ENCODE measurements at regions of chr11 and their contacts with region 1.

Region 1: DNA sequence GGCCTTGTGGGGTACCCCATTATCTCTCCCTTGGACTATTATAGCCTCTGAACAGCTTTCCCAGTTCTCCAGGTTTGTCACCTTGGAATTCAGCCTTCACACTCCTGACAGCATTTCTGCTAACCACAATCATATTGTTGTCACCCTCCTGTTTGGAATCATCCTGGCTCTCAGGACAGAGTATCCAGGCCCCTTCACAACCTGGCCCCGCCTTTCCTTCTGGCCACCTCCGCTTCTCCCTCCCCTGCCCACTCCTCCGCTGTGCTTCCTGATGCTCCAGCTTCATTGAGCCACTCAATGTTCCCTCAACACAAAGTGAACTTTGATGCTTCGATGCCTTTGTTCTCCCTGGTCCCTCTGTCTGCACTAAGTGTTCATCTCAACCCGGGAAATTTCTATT is 3.1 kb downstream of the GPR83 start:
- DNase-seq: no peak
- ATAC-seq: no peak
- H3K4me3 ChIP-seq: no peak overlapping the region
- H3K27ac ChIP-seq: no peak overlapping the region
- H3K4me1 ChIP-seq: no peaks in the 10 kb centered on the region
- H3K27me3 ChIP-seq: no peaks in the 10 kb centered on the region

Region 2: DNA sequence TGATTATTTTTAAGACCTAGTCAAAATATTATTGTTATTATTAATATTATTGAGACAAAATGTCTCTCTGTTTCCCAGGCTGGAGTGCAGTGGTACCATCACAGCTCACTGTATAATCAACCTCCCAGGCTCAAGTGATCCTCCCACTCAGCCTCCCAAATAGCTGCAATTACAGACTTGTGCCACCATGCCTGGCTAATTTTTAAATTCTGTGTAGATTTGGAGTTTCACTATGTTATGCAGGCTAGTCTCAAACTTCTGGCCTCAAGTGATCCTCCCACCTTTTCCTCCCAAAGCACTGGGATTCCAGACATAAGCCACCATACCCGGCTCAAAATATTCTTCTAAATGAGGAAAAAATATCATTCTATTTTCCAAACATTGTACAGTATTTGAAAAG is 1237.3 kb before region 1 on chr11:
- intact Hi-C with region 1: loop called in 1 of 2 experiments (anchors 5 kb)
- DNase-seq: no peak
- ATAC-seq: no peak
- H3K4me3 ChIP-seq: no peak overlapping the region
- H3K27ac ChIP-seq: no peak overlapping the region
- H3K4me1 ChIP-seq: no peaks in the 10 kb centered on the region
- H3K27me3 ChIP-seq: no peaks in the 10 kb centered on the region

Region 3: GRCh38 chr11:94433049-94433448 is 34.9 kb after region 1 on chr11:
- intact Hi-C with region 1: no loop called
- DNase-seq: no peak
- ATAC-seq: no peak
- H3K4me3 ChIP-seq: no peak overlapping the region
- H3K27ac ChIP-seq: no peak overlapping the region
- H3K4me1 ChIP-seq: no peaks in the 10 kb centered on the region
- H3K27me3 ChIP-seq: no peaks in the 10 kb centered on the region

Region 4: DNA sequence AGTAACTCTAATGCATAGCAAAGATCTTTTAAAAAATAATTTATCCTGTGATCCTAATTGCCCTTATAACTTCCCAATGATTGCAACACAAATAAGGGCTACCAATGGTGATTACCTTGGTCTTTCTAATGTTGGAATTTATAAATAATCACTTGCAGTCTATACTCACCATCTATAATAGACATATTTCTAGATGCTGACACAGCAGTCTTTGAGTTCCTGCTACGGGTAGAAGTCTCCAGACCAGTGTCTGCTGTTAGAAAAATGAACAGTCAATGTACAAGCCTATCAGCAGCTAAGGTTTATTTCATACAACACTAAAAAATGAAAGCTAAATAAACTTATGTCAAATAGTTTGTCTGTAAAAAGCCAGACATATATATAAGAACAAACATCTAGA is 47.5 kb after region 1 on chr11:
- intact Hi-C with region 1: no loop called
- DNase-seq: no peak
- ATAC-seq: no peak
- H3K4me3 ChIP-seq: no peak overlapping the region
- H3K27ac ChIP-seq: no peak overlapping the region
- H3K4me1 ChIP-seq: no peaks in the 10 kb centered on the region
- H3K27me3 ChIP-seq: no peaks in the 10 kb centered on the region